GM12878 (cell line): ENCODE measurements at regions of chr9 and their contacts with region 1.

Region 1: GRCh38 chr9:35664531-35665470 is at the start of gene ARHGEF39:
- DNase-seq: no peak
- ATAC-seq: peak; percentile 92
- H3K4me3 ChIP-seq: peak within 1 kb of the TSS; percentile 79
- H3K27ac ChIP-seq: peak within 1 kb of the TSS; percentile 85
- H3K4me1 ChIP-seq: peaks cover 33% of the 10 kb centered on the region
- H3K27me3 ChIP-seq: no peaks in the 10 kb centered on the region
- CTCF ChIP-seq: peak; percentile 15 to 44 (median 18); a peak in 3 of 6 replicates
- EP300 ChIP-seq: no peak
- POLR2A ChIP-seq: peak; percentile 83
- RAD21 ChIP-seq: 0 out of 2 replicates have a peak, but pooled peaks have one; percentile 7
- polyA plus RNA-seq, gene ARHGEF39: 2.0 to 5.0 TPM

Region 2: DNA sequence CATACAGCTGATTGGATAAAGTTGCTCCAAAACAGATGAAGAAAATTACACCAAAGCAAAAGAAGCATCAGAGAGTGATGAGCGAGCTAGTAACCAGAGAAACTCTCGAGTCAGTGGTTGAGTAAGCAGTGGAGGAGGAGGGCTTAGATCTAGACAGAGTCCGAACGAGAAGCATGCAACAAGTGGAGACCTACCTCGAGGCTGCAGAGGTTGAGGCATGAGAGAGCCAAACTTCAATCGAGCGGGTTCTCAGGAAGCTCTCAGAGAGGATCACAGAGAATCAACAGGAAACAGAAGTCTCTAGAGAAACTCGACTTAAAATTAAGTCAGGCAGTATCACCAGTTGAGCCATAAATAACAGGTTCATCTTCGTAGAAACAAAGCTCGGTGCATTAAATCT is 168.8 kb before region 1 on chr9:
- CTCF ChIA-PET with region 1: no interaction called
- POLR2A ChIA-PET with region 1: no interaction called
- RAD21 ChIA-PET with region 1: no interaction called
- SMC1A ChIA-PET with region 1: no interaction called
- in situ Hi-C with region 1: no loop called
- intact Hi-C with region 1: no loop called
- DNase-seq: no peak
- ATAC-seq: no peak
- H3K4me3 ChIP-seq: no peak overlapping the region
- H3K27ac ChIP-seq: no peak overlapping the region
- H3K4me1 ChIP-seq: no peaks in the 10 kb centered on the region
- H3K27me3 ChIP-seq: no peaks in the 10 kb centered on the region
- CTCF ChIP-seq: no peak
- EP300 ChIP-seq: no peak
- POLR2A ChIP-seq: no peak
- RAD21 ChIP-seq: no peak

Region 3: GRCh38 chr9:35603987-35604577 is 60.7 kb before region 1 on chr9:
- CTCF ChIA-PET with region 1: interaction called, 12 read pairs
- POLR2A ChIA-PET with region 1: interaction called, 9 read pairs
- RAD21 ChIA-PET with region 1: interaction called, 7 read pairs
- SMC1A ChIA-PET with region 1: interaction called, 8 read pairs
- in situ Hi-C with region 1: no loop called
- intact Hi-C with region 1: no loop called
- DNase-seq: peak; percentile 98
- ATAC-seq: peak; percentile 97
- H3K4me3 ChIP-seq: peak overlapping the region; percentile 77
- H3K27ac ChIP-seq: peak overlapping the region; percentile 73
- H3K4me1 ChIP-seq: peaks cover 8% of the 10 kb centered on the region
- H3K27me3 ChIP-seq: no peaks in the 10 kb centered on the region
- CTCF ChIP-seq: peak; percentile 81 to 98 (median 90)
- EP300 ChIP-seq: no peak
- POLR2A ChIP-seq: peak; percentile 81
- RAD21 ChIP-seq: peak; percentile 76

Region 4: DNA sequence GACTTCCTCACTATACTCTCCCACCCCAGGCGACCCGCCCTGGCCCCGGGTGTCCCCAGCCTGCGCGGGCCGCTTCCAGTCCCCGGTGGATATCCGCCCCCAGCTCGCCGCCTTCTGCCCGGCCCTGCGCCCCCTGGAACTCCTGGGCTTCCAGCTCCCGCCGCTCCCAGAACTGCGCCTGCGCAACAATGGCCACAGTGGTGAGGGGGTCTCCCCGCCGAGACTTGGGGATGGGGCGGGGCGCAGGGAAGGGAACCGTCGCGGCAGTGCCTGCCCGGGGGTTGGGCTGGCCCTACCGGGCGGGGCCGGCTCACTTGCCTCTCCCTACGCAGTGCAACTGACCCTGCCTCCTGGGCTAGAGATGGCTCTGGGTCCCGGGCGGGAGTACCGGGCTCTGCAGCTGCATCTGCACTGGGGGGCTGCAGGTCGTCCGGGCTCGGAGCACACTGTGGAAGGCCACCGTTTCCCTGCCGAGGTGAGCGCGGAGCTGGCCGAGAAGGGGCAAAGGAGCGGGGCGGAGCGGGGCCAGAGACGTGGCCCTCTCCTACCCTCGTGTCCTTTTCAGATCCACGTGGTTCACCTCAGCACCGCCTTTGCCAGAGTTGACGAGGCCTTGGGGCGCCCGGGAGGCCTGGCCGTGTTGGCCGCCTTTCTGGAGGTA is 11.1 kb after region 1 on chr9:
- CTCF ChIA-PET with region 1: interaction called, 14 read pairs
- POLR2A ChIA-PET with region 1: interaction called, 11 read pairs
- RAD21 ChIA-PET with region 1: interaction called, 4 read pairs
- SMC1A ChIA-PET with region 1: interaction called, 6 read pairs
- in situ Hi-C with region 1: no loop called
- intact Hi-C with region 1: no loop called
- DNase-seq: no peak
- ATAC-seq: peak; percentile 66
- H3K4me3 ChIP-seq: peak overlapping the region; percentile 22; the same call in 1 of the 2 replicates
- H3K27ac ChIP-seq: no peak overlapping the region
- H3K4me1 ChIP-seq: peaks cover 8% of the 10 kb centered on the region
- H3K27me3 ChIP-seq: peaks cover 3 to 7% of the 10 kb centered on the region in 2 experiments
- CTCF ChIP-seq: no peak
- EP300 ChIP-seq: no peak
- POLR2A ChIP-seq: no peak
- RAD21 ChIP-seq: no peak

Region 5: DNA sequence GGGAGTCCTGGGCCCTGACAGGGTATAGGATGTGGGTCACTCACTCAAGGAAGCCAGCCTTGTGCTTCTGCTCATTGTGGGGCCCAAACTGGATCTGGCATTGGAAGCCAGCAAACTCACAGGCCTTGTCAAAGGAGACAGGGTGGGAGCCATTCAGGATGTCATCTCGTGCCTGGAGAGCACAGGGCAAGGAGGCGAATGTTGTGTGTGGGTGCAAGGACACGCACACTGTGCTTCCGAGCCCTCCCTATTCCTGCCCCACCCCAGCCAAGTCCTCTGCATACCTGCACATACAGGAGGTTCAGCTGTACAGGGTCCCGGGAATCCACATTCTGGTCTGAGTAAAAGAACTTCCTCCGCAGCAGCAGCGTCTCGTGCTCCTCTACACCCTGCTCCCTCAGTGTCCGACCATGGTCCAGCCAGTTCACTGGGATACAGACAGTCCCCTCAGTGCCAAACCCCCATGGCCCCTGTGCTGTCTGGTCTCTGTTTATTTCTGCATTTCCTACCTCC is 59.2 kb after region 1 on chr9:
- CTCF ChIA-PET with region 1: interaction called, 183 read pairs
- POLR2A ChIA-PET with region 1: interaction called, 163 read pairs
- RAD21 ChIA-PET with region 1: interaction called, 32 read pairs
- SMC1A ChIA-PET with region 1: interaction called, 145 read pairs
- in situ Hi-C with region 1: loop called (anchors 5 kb)
- intact Hi-C with region 1: no loop called
- DNase-seq: no peak
- ATAC-seq: no peak
- H3K4me3 ChIP-seq: no peak overlapping the region
- H3K27ac ChIP-seq: no peak overlapping the region
- H3K4me1 ChIP-seq: peaks cover 13% of the 10 kb centered on the region
- H3K27me3 ChIP-seq: no peaks in the 10 kb centered on the region
- CTCF ChIP-seq: no peak
- EP300 ChIP-seq: no peak
- POLR2A ChIP-seq: peak; percentile 34; the same call in 1 of the 2 replicates
- RAD21 ChIP-seq: no peak

Region 6: GRCh38 chr9:35781066-35781465 is 116.3 kb after region 1 on chr9:
- CTCF ChIA-PET with region 1: no interaction called
- POLR2A ChIA-PET with region 1: no interaction called
- RAD21 ChIA-PET with region 1: no interaction called
- SMC1A ChIA-PET with region 1: no interaction called
- in situ Hi-C with region 1: no loop called
- intact Hi-C with region 1: no loop called
- DNase-seq: no peak
- ATAC-seq: no peak
- H3K4me3 ChIP-seq: no peak overlapping the region
- H3K27ac ChIP-seq: no peak overlapping the region
- H3K4me1 ChIP-seq: no peaks in the 10 kb centered on the region
- H3K27me3 ChIP-seq: no peaks in the 10 kb centered on the region
- CTCF ChIP-seq: no peak
- EP300 ChIP-seq: no peak
- POLR2A ChIP-seq: no peak
- RAD21 ChIP-seq: no peak